Panc1 (cell line): ENCODE measurements at regions of chr5 and their contacts with region 1.

Region 1: GRCh38 chr5:1325870-1326532 is 18.9 kb downstream of the CLPTM1L start:
- DNase-seq: no peak
- ATAC-seq: peak; percentile 53
- H3K4me3 ChIP-seq: no peak overlapping the region
- H3K27ac ChIP-seq: peak overlapping the region; percentile 81
- H3K4me1 ChIP-seq: peaks cover 5% of the 10 kb centered on the region
- H3K27me3 ChIP-seq: no peaks in the 10 kb centered on the region
- CTCF ChIP-seq: no peak

Region 2: DNA sequence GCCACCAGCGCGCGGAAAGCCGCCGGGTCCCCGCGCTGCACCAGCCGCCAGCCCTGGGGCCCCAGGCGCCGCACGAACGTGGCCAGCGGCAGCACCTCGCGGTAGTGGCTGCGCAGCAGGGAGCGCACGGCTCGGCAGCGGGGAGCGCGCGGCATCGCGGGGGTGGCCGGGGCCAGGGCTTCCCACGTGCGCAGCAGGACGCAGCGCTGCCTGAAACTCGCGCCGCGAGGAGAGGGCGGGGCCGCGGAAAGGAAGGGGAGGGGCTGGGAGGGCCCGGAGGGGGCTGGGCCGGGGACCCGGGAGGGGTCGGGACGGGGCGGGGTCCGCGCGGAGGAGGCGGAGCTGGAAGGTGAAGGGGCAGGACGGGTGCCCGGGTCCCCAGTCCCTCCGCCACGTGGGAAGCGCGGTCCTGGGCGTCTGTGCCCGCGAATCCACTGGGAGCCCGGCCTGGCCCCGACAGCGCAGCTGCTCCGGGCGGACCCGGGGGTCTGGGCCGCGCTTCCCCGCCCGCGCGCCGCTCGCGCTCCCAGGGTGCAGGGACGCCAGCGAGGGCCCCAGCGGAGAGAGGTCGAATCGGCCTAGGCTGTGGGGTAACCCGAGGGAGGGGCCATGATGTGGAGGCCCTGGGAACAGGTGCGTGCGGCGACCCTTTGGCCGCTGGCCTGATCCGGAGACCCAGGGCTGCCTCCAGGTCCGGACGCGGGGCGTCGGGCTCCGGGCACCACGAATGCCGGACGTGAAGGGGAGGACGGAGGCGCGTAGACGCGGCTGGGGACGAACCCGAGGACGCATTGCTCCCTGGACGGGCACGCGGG is 31.0 kb before region 1 on chr5 and contains the start of gene TERT:
- CTCF ChIA-PET with region 1: no interaction called
- POLR2A ChIA-PET with region 1: no interaction called
- in situ Hi-C with region 1: no loop called
- intact Hi-C with region 1: loop called (anchors 2 kb)
- DNase-seq: no peak
- ATAC-seq: peak; percentile 79
- H3K4me3 ChIP-seq: peak within 1 kb of the TSS; percentile 44 to 47
- H3K27ac ChIP-seq: no peak within 1 kb of the TSS
- H3K4me1 ChIP-seq: no peaks in the 10 kb centered on the region; the same call in 1 of the 2 replicates
- H3K27me3 ChIP-seq: no peaks in the 10 kb centered on the region
- CTCF ChIP-seq: no peak
- total RNA-seq, gene TERT: 8.9 TPM

Region 3: GRCh38 chr5:1343315-1343751 is 17.3 kb after region 1 on chr5:
- CTCF ChIA-PET with region 1: interaction called, 3 read pairs
- POLR2A ChIA-PET with region 1: interaction called, 10 read pairs
- in situ Hi-C with region 1: no loop called
- intact Hi-C with region 1: no loop called
- DNase-seq: no peak
- ATAC-seq: no peak
- H3K4me3 ChIP-seq: peak overlapping the region; percentile 96 to 98; a peak in 3 of 4 replicates
- H3K27ac ChIP-seq: peak overlapping the region; percentile 94; the same call in 1 of the 2 replicates
- H3K4me1 ChIP-seq: peaks cover 16% of the 10 kb centered on the region
- H3K27me3 ChIP-seq: no peaks in the 10 kb centered on the region
- CTCF ChIP-seq: no peak

Region 4: GRCh38 chr5:1479581-1480188 is 153.7 kb after region 1 on chr5:
- CTCF ChIA-PET with region 1: interaction called, 17 read pairs
- POLR2A ChIA-PET with region 1: no interaction called
- in situ Hi-C with region 1: no loop called
- intact Hi-C with region 1: no loop called
- DNase-seq: no peak
- ATAC-seq: peak; percentile 28
- H3K4me3 ChIP-seq: no peak overlapping the region
- H3K27ac ChIP-seq: no peak overlapping the region
- H3K4me1 ChIP-seq: no peaks in the 10 kb centered on the region
- H3K27me3 ChIP-seq: no peaks in the 10 kb centered on the region
- CTCF ChIP-seq: peak; percentile 89

Region 5: GRCh38 chr5:1511651-1512540 is 185.9 kb after region 1 on chr5:
- CTCF ChIA-PET with region 1: no interaction called
- POLR2A ChIA-PET with region 1: no interaction called
- in situ Hi-C with region 1: no loop called
- intact Hi-C with region 1: no loop called
- DNase-seq: no peak
- ATAC-seq: peak; percentile 62
- H3K4me3 ChIP-seq: no peak overlapping the region
- H3K27ac ChIP-seq: no peak overlapping the region
- H3K4me1 ChIP-seq: peaks cover 7% of the 10 kb centered on the region
- H3K27me3 ChIP-seq: no peaks in the 10 kb centered on the region
- CTCF ChIP-seq: no peak